Heart left ventricle (tissue), 16 donors: ENCODE measurements at regions of chr10 and their contacts with region 1.

Region 1: GRCh38 chr10:98474628-98475027 is 27.9 kb upstream of the HPS1 start:
- DNase-seq: no peak
- ATAC-seq: no peak
- H3K4me3 ChIP-seq: no peak overlapping the region
- H3K27ac ChIP-seq: no peak overlapping the region
- H3K4me1 ChIP-seq: peaks cover 0 to under 1% (median 0%) of the 10 kb centered on the region in 12 donors
- H3K27me3 ChIP-seq: no peaks in the 10 kb centered on the region
- CTCF ChIP-seq: no peak
- POLR2A ChIP-seq: no peak

Region 2: DNA sequence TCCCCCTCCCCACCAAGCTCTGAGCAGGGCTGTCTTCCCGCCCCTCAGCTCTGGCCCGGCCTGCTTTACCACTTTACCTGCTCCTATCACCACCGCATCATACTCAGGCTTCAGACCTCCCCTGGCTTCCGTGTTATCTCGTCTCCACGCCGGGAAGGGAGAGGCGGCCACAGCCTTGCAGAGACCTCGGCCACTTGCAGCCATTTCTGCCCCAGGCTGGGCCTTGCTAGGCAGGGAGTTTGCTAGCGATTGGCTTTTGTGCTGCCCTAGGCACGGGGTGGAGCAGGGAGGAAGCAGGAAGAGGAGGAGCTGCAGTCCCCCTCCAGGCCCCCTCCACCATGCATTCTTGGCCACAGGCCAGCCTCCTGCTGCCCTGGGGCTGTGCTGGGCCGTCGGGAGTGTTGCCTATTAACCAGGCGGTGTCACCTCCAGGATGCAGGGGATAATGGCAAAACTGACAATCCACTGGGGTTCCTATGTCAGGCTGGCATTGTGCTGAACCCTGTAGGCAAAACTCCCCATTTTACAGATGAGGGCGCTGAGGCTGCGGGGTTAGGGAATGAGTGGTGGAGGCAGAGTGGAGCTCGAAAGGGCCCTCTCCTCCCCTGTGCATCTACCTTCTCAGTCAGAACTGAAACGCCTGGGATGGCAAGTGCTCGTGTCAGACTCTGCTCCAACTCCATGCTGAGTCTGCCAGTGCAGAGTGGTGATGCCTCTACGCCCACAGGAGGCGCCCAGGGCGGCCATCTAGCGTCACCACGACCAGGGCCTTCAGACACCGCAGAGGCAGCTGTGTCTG is 59.5 kb before region 1 on chr10 and contains the start of gene PYROXD2:
- intact Hi-C with region 1: no loop called
- DNase-seq: peak; percentile 93 to 96 (median 96)
- ATAC-seq: peak; percentile 95 to 99 (median 98)
- H3K4me3 ChIP-seq: peak within 1 kb of the TSS; percentile 9 to 67 (median 60)
- H3K27ac ChIP-seq: peak within 1 kb of the TSS; percentile 67 to 90 (median 84)
- H3K4me1 ChIP-seq: peaks cover 0 to 50% (median 24%) of the 10 kb centered on the region in 12 donors
- H3K27me3 ChIP-seq: no peaks in the 10 kb centered on the region
- CTCF ChIP-seq: peak in 1 of 12 donors; percentile 12
- POLR2A ChIP-seq: peak in 1 of 2 donors; percentile 78
- total RNA-seq, gene PYROXD2: 5.2 to 22.0 (median 11.1) TPM

Region 3: DNA sequence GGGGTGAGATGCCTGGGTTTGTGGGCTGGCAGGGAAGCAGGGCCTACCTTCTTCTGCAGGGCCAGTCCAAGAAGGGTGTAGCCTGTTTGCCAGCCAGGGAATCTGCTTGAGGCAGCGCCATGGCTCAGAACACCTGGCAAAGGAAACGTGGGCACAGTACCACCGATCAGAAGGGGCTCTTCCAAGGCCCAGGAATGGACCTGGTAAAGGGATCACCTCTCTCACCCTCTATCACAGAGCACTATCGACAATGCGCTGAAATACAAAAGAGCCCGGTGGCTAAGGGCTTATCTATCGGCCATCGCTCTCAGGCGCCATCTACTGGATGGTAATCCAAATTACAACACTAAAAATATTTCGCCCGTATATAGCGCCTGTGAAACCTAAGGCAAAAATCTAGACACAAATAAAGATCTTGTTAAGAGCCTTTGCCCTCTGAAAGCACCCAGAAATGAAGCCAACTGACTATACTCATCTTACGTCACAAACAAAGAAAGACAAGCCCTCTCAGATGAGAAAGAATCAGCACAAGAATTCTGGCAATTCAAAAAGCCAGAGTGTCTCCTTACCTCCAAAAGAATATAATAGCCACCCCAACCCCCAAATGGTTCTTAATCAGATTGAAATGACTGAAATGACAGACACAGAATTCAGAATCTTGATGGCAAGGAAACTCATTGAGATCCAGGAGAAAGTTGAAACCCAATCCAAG is 189.9 kb after region 1 on chr10:
- intact Hi-C with region 1: loop called in 5 of 10 experiments (anchors 5 to 10 kb)
- DNase-seq: peak in 1 of 5 donors; percentile 37
- ATAC-seq: no peak
- H3K4me3 ChIP-seq: no peak overlapping the region
- H3K27ac ChIP-seq: no peak overlapping the region
- H3K4me1 ChIP-seq: no peaks in the 10 kb centered on the region
- H3K27me3 ChIP-seq: no peaks in the 10 kb centered on the region
- CTCF ChIP-seq: peak in 11 of 12 donors; percentile 25 to 57 (median 44)
- POLR2A ChIP-seq: no peak

Region 4: DNA sequence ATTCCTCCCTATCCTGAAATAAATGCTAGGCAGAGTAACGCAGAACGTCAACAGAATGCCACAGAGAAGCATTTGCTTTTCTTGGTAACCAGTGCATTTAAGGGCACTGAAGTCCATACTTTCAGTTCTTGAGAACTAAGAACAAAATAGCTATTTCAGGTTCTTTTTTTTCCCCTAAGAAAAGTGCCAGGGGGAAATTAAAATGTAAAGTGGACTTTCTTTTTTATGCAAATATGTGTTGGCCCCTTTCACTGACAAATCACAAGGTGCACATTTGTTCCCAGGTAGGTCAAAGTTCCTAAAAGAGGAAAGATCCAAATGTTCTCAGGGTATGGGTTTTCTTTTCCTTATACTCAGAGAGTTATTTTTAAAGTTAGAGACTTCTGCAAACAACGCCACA is 609.5 kb after region 1 on chr10:
- intact Hi-C with region 1: no loop called
- DNase-seq: no peak
- ATAC-seq: no peak
- H3K4me3 ChIP-seq: no peak overlapping the region
- H3K27ac ChIP-seq: no peak overlapping the region
- H3K4me1 ChIP-seq: no peaks in the 10 kb centered on the region
- H3K27me3 ChIP-seq: no peaks in the 10 kb centered on the region
- CTCF ChIP-seq: no peak
- POLR2A ChIP-seq: no peak